Panc1 (cell line): ENCODE measurements at regions of chrX and their contacts with region 1.

Region 1: GRCh38 chrX:48772602-48773001 is 11.1 kb downstream of the GLOD5 start:
- DNase-seq: no peak
- ATAC-seq: no peak
- H3K4me3 ChIP-seq: no peak overlapping the region
- H3K27ac ChIP-seq: no peak overlapping the region
- H3K4me1 ChIP-seq: no peaks in the 10 kb centered on the region
- H3K27me3 ChIP-seq: no peaks in the 10 kb centered on the region
- CTCF ChIP-seq: no peak

Region 2: GRCh38 chrX:48569958-48570357 is 202.6 kb before region 1 on chrX:
- CTCF ChIA-PET with region 1: no interaction called
- POLR2A ChIA-PET with region 1: no interaction called
- in situ Hi-C with region 1: no loop called
- intact Hi-C with region 1: no loop called
- DNase-seq: no peak
- ATAC-seq: no peak
- H3K4me3 ChIP-seq: no peak overlapping the region
- H3K27ac ChIP-seq: no peak overlapping the region
- H3K4me1 ChIP-seq: no peaks in the 10 kb centered on the region
- H3K27me3 ChIP-seq: no peaks in the 10 kb centered on the region
- CTCF ChIP-seq: no peak

Region 3: GRCh38 chrX:48715072-48715471 is 57.5 kb before region 1 on chrX:
- CTCF ChIA-PET with region 1: no interaction called
- POLR2A ChIA-PET with region 1: no interaction called
- in situ Hi-C with region 1: no loop called
- intact Hi-C with region 1: no loop called
- DNase-seq: no peak
- ATAC-seq: no peak
- H3K4me3 ChIP-seq: no peak overlapping the region
- H3K27ac ChIP-seq: no peak overlapping the region
- H3K4me1 ChIP-seq: no peaks in the 10 kb centered on the region
- H3K27me3 ChIP-seq: no peaks in the 10 kb centered on the region
- CTCF ChIP-seq: no peak

Region 4: DNA sequence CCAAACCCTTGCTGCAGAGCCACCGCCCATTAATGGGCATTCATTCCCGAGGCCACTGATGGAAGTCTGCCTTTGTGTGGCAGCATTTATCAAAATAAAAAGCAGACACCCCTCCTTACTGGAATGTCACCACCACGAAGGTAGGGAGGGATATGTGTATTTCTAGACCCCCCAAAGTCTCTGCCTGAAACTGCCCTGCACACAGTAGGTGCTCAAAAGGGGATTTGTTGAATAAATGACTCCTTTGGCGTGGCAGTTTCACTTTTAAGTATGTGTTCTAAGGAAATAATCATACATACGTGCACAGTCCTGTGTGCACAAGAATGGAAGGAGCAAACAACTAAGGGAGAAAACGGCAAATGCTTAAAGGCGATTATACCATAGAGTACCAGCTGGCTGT is 34.7 kb before region 1 on chrX:
- CTCF ChIA-PET with region 1: no interaction called
- POLR2A ChIA-PET with region 1: interaction called, 13 read pairs
- in situ Hi-C with region 1: no loop called
- intact Hi-C with region 1: no loop called
- DNase-seq: no peak
- ATAC-seq: no peak; the same call in 1 of the 2 replicates
- H3K4me3 ChIP-seq: peak overlapping the region; percentile 58 to 74
- H3K27ac ChIP-seq: peak overlapping the region; percentile 95
- H3K4me1 ChIP-seq: peaks cover 4% of the 10 kb centered on the region
- H3K27me3 ChIP-seq: no peaks in the 10 kb centered on the region
- CTCF ChIP-seq: no peak